CD4-positive, alpha-beta memory T cell (primary cell): ENCODE measurements at regions of chr14 and their contacts with region 1.

Region 1: GRCh38 chr14:55071870-55072640 is 20.6 kb downstream of the MAPK1IP1L start:
- DNase-seq: peak; percentile 24 to 52 (median 36)
- H3K4me3 ChIP-seq: peak overlapping the region in 1 of 2 donors; percentile 6
- H3K4me3 Mint-ChIP-seq: peak overlapping the region; percentile 24 to 85 (median 57)
- H3K27ac ChIP-seq: peak overlapping the region; percentile 29
- H3K27ac Mint-ChIP-seq: peak overlapping the region; percentile 72 to 93 (median 90)
- H3K4me1 ChIP-seq: peaks cover 37% of the 10 kb centered on the region
- H3K4me1 Mint-ChIP-seq: peaks cover 24 to 44% (median 38%) of the 10 kb centered on the region in 4 donors
- H3K27me3 ChIP-seq: no peaks in the 10 kb centered on the region
- H3K27me3 Mint-ChIP-seq: no peaks in the 10 kb centered on the region

Region 2: GRCh38 chr14:55026793-55027561 is 45.1 kb before region 1 on chr14 and contains the starts of genes SOCS4 and WDHD1:
- CTCF ChIA-PET with region 1: interaction called, 3 read pairs
- POLR2A ChIA-PET with region 1: interaction called, 11 read pairs
- intact Hi-C with region 1: no loop called
- DNase-seq: peak; percentile 96 to 98 (median 97)
- H3K4me3 ChIP-seq: peak within 1 kb of the TSS; percentile 70 to 87
- H3K4me3 Mint-ChIP-seq: peak within 1 kb of the TSS; percentile 87 to 95 (median 94)
- H3K27ac ChIP-seq: peak within 1 kb of the TSS; percentile 89
- H3K27ac Mint-ChIP-seq: peak within 1 kb of the TSS; percentile 87 to 98 (median 96)
- H3K4me1 ChIP-seq: peaks cover 47% of the 10 kb centered on the region
- H3K4me1 Mint-ChIP-seq: peaks cover 37 to 56% (median 44%) of the 10 kb centered on the region in 4 donors
- H3K27me3 ChIP-seq: no peaks in the 10 kb centered on the region
- H3K27me3 Mint-ChIP-seq: no peaks in the 10 kb centered on the region
- total RNA-seq, gene SOCS4: 19.2 to 24.5 TPM
- total RNA-seq, gene WDHD1: 4.0 to 4.1 TPM